HCT116 (cell line): ENCODE measurements at regions of chr2 and their contacts with region 1.

Region 1: DNA sequence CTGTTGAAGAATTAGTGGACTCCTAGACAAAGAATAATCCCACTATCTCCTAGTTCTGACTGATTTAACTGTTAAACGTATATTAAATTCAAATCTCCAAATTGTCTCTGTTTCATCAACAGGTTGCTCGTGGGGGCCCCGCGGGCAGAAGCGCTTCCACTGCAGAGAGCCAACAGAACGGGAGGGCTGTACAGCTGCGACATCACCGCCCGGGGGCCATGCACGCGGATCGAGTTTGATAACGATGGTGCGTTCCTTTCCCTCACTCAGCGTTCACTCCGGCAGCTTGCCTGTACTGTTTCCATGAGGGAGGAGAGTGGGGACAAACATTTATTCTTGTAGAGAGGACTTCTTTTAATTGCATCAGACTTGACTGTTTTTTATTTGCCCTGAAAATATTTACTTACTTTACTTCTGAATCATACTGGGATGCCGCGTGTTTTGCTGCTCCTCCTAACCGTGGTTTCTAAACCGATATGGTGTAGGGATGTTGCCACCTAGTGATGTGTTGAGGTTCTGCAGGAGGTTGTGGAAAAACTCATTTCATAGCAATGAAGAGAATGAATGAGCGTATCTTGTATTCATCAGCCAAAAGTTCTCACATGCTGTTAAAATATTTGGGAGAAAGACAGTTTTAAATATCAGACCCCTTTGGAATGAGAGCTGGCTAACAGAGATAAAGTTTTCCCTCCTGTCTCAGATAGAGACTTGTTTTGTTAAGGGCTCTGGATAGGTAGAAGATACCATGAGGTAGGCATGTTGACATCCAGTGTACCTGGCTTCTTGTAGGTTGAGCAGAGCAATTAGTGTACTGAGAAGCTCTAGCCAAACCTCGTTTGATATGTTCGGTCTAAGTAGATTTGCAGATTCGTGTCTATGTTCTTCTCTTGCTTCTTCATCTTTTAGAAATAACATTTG is 38.3 kb downstream of the ITGA6 start:
- DNase-seq: no peak
- ATAC-seq: peak; percentile 51
- H3K4me3 ChIP-seq: no peak overlapping the region
- H3K27ac ChIP-seq: no peak overlapping the region
- H3K4me1 ChIP-seq: peaks cover 23 to 50% of the 10 kb centered on the region in 2 experiments
- H3K27me3 ChIP-seq: no peaks in the 10 kb centered on the region
- CTCF ChIP-seq: peak; percentile 58 to 84 (median 78); a peak in 5 of 6 replicates
- POLR2A ChIP-seq: no peak
- RAD21 ChIP-seq: peak; percentile 90

Region 2: DNA sequence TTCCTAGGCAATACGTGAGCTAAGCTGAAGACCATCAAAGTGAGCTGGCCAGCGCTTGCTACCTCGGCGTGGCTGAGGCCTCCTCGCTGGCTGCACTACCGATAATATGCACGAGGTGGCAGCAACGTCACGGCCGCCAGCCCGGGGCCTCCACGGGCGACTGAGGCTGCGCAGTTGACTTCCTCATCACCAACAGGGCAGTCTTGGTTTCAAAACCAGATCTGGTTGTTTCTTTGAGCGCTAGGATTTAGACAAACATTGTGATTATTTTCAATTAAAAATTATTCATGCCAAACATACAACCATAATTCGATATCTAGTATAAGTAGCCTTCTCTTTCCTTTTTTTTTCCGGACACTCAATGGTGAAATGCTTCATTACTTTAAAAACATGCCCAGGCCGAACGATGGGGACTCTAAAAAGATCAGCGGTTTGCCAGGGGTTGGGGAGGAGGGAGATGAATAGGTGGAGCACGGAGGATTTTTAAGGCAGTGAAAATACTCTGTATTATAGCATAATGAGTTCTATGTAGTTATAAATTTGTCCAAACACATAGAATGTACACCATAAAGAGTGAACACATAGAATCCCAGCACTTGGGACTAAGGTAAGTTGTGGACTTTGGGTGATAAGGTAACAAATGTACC is 891.4 kb before region 1 on chr2:
- CTCF ChIA-PET with region 1: no interaction called
- POLR2A ChIA-PET with region 1: no interaction called
- RAD21 ChIA-PET with region 1: no interaction called
- intact Hi-C with region 1: loop called (anchors 1 kb)
- DNase-seq: peak; percentile 54
- ATAC-seq: peak; percentile 99
- H3K4me3 ChIP-seq: no peak overlapping the region
- H3K27ac ChIP-seq: no peak overlapping the region
- H3K4me1 ChIP-seq: 0 out of 4 replicates have a peak, but pooled peaks cover 0 to 6% of the 10 kb centered on the region in 2 experiments
- H3K27me3 ChIP-seq: no peaks in the 10 kb centered on the region
- CTCF ChIP-seq: peak; percentile 73 to 97 (median 88)
- POLR2A ChIP-seq: no peak
- RAD21 ChIP-seq: peak; percentile 97

Region 3: GRCh38 chr2:172102391-172103278 is 363.0 kb before region 1 on chr2 and contains the start of gene DLX2:
- CTCF ChIA-PET with region 1: interaction called, 3 read pairs
- POLR2A ChIA-PET with region 1: no interaction called
- RAD21 ChIA-PET with region 1: no interaction called
- intact Hi-C with region 1: loop called (anchors 5 kb)
- DNase-seq: peak; percentile 85
- ATAC-seq: peak; percentile 71
- H3K4me3 ChIP-seq: peak within 1 kb of the TSS; percentile 60 to 64
- H3K27ac ChIP-seq: peak within 1 kb of the TSS; percentile 53; the same call in 1 of the 2 replicates
- H3K4me1 ChIP-seq: peaks cover 41 to 57% of the 10 kb centered on the region in 2 experiments
- H3K27me3 ChIP-seq: no peaks in the 10 kb centered on the region
- CTCF ChIP-seq: no peak
- POLR2A ChIP-seq: no peak
- RAD21 ChIP-seq: no peak
- total RNA-seq, gene DLX2: 3.7 TPM

Region 4: DNA sequence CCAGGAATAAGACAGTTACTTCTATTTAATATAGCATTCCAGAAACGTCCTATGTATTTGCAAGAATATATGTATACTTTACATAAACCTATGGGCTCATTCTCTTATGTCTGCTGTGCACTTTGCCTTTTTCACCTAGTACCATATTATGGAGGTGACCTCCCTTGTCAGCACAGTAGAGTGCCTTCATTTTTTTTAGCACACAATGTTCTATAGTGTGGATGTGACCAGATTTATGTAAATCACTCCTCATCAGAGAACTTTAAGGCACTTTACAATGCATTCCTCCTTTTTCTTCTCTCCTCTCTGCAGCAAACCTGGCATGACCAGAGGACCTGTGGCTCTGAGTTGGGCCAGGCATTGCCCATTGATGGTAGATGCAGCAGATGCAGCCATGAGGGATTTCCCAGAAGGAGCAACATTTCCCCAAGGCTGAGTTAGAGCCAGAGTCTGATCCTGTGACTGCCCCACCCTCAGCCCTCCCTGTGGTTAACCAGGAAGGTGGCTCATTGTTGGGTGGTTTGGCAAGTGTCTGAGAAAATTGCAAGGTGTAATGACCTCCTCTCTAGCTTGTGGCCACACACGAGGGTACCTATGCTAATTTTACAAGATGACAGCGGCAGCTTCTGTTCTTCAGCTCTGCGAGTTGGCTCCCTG is 286.5 kb before region 1 on chr2:
- CTCF ChIA-PET with region 1: interaction called, 73 read pairs
- POLR2A ChIA-PET with region 1: interaction called, 5 read pairs
- RAD21 ChIA-PET with region 1: interaction called in 1 of 2 experiments, 6 read pairs
- intact Hi-C with region 1: no loop called
- DNase-seq: no peak
- ATAC-seq: peak; percentile 63
- H3K4me3 ChIP-seq: no peak overlapping the region
- H3K27ac ChIP-seq: no peak overlapping the region
- H3K4me1 ChIP-seq: peaks cover 5 to 24% of the 10 kb centered on the region in 2 experiments; a peak in 3 of 4 replicates
- H3K27me3 ChIP-seq: no peaks in the 10 kb centered on the region
- CTCF ChIP-seq: no peak
- POLR2A ChIP-seq: no peak
- RAD21 ChIP-seq: no peak

Region 5: GRCh38 chr2:172253190-172254052 is 212.3 kb before region 1 on chr2:
- CTCF ChIA-PET with region 1: interaction called, 22 read pairs
- POLR2A ChIA-PET with region 1: interaction called, 11 read pairs
- RAD21 ChIA-PET with region 1: interaction called in 1 of 2 experiments, 8 read pairs
- intact Hi-C with region 1: loop called (anchors 2 kb)
- DNase-seq: peak; percentile 100
- ATAC-seq: peak; percentile 77
- H3K4me3 ChIP-seq: peak overlapping the region in 1 of 2 experiments; percentile 40
- H3K27ac ChIP-seq: peak overlapping the region; percentile 96
- H3K4me1 ChIP-seq: peaks cover 64 to 86% of the 10 kb centered on the region in 2 experiments
- H3K27me3 ChIP-seq: no peaks in the 10 kb centered on the region
- CTCF ChIP-seq: 0 out of 6 replicates have a peak, but pooled peaks of 1 of the 3 experiments have one; percentile 8
- POLR2A ChIP-seq: peak; percentile 50
- RAD21 ChIP-seq: no peak

Region 6: DNA sequence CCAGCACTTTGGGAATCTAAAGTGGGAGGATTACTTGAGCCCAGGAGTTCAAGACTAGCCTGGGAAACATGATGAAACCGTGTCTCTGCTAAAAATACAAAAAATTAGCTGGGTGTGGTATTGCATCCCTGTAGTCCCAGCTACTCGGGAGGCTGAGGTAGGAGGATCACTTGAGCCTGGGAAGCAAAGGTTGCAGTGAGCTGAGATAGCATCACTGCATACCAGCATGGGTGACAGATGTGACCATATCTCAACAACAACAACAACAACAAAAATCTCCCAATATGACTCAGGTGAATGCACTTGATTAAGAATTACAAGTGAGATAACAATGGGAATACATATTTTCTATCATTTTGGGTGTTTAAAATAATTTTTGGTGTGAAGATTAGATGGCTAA is 202.0 kb before region 1 on chr2:
- CTCF ChIA-PET with region 1: no interaction called
- POLR2A ChIA-PET with region 1: no interaction called
- RAD21 ChIA-PET with region 1: no interaction called
- intact Hi-C with region 1: no loop called
- DNase-seq: no peak
- ATAC-seq: no peak
- H3K4me3 ChIP-seq: no peak overlapping the region
- H3K27ac ChIP-seq: no peak overlapping the region
- H3K4me1 ChIP-seq: no peaks in the 10 kb centered on the region
- H3K27me3 ChIP-seq: no peaks in the 10 kb centered on the region
- CTCF ChIP-seq: no peak
- POLR2A ChIP-seq: no peak
- RAD21 ChIP-seq: no peak

Region 7: DNA sequence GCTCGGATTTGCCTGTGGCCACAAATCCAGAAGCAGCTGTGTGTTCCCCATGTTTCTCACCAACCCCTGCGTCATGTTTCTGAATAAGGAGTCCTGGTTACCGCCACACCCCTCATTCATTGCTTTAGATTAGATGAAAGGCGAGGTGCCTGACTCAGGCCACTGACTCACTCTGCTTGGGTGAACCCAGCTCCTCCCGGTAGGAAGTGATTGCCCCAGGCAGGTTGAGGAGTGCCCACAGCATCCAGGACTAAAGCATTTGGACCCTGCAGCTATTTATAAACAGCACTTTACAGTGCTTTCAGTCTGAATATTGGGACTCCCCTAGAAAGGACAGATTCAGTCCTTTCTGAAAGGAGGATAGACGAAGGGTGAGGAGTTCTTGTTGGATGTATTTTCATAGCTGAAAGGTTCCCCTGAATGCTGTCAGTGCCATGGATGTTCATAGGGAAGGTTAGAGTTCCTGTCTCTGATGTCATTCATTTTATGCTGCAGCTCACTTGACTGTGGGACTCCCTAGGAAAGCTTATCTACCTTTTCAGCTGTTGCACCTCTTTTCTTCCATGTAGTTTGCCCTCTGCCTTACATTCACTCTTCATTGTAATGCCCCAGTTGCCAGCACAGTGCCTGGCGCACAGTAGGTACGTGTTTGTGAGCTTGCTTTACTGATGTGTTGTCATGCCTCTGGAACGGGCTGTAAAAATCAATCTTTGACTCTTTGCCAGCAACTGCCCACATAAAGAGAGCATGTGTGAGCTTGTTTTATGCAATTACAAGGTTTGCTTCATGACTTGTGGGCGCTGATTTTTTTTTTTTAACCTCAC is 23.4 kb before region 1 on chr2:
- CTCF ChIA-PET with region 1: interaction called, 64 read pairs
- POLR2A ChIA-PET with region 1: interaction called, 15 read pairs
- RAD21 ChIA-PET with region 1: interaction called, 4 to 10 read pairs
- intact Hi-C with region 1: no loop called
- DNase-seq: peak; percentile 98
- ATAC-seq: peak; percentile 87
- H3K4me3 ChIP-seq: peak overlapping the region; percentile 13 to 41
- H3K27ac ChIP-seq: peak overlapping the region; percentile 82
- H3K4me1 ChIP-seq: peaks cover 78 to 97% of the 10 kb centered on the region in 2 experiments
- H3K27me3 ChIP-seq: no peaks in the 10 kb centered on the region
- CTCF ChIP-seq: no peak
- POLR2A ChIP-seq: no peak
- RAD21 ChIP-seq: peak; percentile 44

Region 8: DNA sequence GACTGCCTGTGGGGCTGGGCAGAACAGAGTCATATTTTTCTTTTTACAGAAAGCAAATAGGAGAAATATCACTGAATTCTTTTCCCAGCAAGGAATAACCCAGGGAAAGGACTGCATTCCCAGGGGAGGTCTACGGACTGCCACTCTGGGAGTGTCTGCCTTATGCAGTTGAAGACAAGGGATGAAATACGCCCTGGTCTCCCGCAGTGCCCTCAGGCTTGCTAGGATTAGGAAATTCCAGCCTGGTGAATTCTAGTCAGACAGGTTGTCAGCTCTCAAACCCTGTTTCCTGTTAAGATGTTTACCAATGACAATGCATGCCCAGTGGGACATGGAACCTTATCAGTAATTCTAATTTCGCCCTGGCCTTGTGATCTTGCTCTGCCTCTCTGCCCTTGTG is 59.9 kb after region 1 on chr2:
- CTCF ChIA-PET with region 1: no interaction called
- POLR2A ChIA-PET with region 1: no interaction called
- RAD21 ChIA-PET with region 1: no interaction called
- intact Hi-C with region 1: no loop called
- DNase-seq: no peak
- ATAC-seq: no peak
- H3K4me3 ChIP-seq: no peak overlapping the region
- H3K27ac ChIP-seq: no peak overlapping the region
- H3K4me1 ChIP-seq: no peaks in the 10 kb centered on the region
- H3K27me3 ChIP-seq: no peaks in the 10 kb centered on the region
- CTCF ChIP-seq: no peak
- POLR2A ChIP-seq: no peak
- RAD21 ChIP-seq: no peak

Region 9: GRCh38 chr2:172829229-172829628 is 363.6 kb after region 1 on chr2:
- CTCF ChIA-PET with region 1: no interaction called
- POLR2A ChIA-PET with region 1: no interaction called
- RAD21 ChIA-PET with region 1: no interaction called
- intact Hi-C with region 1: no loop called
- DNase-seq: no peak
- ATAC-seq: no peak
- H3K4me3 ChIP-seq: no peak overlapping the region
- H3K27ac ChIP-seq: no peak overlapping the region
- H3K4me1 ChIP-seq: peaks cover 0 to 4% of the 10 kb centered on the region in 2 experiments; a peak in 1 of 4 replicates
- H3K27me3 ChIP-seq: no peaks in the 10 kb centered on the region; the same call in 1 of the 2 replicates
- CTCF ChIP-seq: no peak
- POLR2A ChIP-seq: no peak
- RAD21 ChIP-seq: no peak